ENCODE measurements at regions of chr6 and their contacts with region 1.

Region 1: DNA sequence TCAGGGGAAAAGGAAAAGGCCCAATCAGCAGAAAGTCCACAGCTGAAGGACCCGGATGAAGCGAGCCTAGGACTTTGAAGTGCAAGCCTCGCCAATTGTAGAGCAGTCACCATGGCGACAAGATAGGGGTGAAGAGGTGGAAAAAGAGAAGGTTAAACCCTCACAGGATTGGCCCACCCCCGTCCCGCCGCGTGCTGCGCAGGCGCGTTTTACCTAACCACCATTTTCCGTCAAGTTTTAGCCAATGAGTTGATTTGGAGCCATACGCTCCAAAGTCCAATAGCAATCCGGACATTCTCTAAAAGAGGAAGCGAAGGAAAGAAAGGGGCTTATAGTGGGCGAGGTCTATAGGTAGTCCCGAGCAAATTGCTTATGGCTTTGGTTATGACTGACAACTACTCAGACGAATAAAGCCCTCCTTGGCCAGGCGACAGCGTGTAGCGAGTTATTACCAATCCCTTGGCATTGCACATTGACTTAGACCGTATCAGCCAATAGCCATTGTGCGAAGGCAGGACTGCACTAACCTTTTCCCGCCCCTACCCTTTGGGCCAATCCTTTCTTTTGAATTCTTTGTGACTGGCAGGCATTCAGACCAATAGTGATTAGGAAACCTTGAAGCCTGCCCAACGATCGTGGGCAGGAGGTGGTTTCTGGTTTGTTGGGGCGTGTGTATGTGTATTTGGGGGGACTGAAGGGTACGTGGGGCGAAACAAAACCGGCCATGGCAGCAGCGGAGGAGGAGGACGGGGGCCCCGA is at the start of gene RNF5:
- DNase-seq: peak; percentile 100
- H3K4me3 Mint-ChIP-seq: peak within 1 kb of the TSS; percentile 79
- H3K27ac Mint-ChIP-seq: peak within 1 kb of the TSS; percentile 91
- H3K4me1 Mint-ChIP-seq: peaks cover 55% of the 10 kb centered on the region
- H3K27me3 Mint-ChIP-seq: no peaks in the 10 kb centered on the region
- CTCF ChIP-seq: no peak
- total RNA-seq, gene RNF5: 28.1 and 29.6 TPM in 2 replicates

Region 2: GRCh38 chr6:32127717-32128592 is 50.0 kb before region 1 on chr6 and contains the start of gene ATF6B:
- CTCF ChIA-PET with region 1: no interaction called
- POLR2A ChIA-PET with region 1: interaction called, 100 read pairs
- intact Hi-C with region 1: no loop called
- DNase-seq: peak; percentile 99
- H3K4me3 Mint-ChIP-seq: peak within 1 kb of the TSS; percentile 99
- H3K27ac Mint-ChIP-seq: peak within 1 kb of the TSS; percentile 96
- H3K4me1 Mint-ChIP-seq: peaks cover 26% of the 10 kb centered on the region
- H3K27me3 Mint-ChIP-seq: no peaks in the 10 kb centered on the region
- CTCF ChIP-seq: no peak
- total RNA-seq, gene ATF6B: 65.6 and 86.5 TPM in 2 replicates

Region 3: DNA sequence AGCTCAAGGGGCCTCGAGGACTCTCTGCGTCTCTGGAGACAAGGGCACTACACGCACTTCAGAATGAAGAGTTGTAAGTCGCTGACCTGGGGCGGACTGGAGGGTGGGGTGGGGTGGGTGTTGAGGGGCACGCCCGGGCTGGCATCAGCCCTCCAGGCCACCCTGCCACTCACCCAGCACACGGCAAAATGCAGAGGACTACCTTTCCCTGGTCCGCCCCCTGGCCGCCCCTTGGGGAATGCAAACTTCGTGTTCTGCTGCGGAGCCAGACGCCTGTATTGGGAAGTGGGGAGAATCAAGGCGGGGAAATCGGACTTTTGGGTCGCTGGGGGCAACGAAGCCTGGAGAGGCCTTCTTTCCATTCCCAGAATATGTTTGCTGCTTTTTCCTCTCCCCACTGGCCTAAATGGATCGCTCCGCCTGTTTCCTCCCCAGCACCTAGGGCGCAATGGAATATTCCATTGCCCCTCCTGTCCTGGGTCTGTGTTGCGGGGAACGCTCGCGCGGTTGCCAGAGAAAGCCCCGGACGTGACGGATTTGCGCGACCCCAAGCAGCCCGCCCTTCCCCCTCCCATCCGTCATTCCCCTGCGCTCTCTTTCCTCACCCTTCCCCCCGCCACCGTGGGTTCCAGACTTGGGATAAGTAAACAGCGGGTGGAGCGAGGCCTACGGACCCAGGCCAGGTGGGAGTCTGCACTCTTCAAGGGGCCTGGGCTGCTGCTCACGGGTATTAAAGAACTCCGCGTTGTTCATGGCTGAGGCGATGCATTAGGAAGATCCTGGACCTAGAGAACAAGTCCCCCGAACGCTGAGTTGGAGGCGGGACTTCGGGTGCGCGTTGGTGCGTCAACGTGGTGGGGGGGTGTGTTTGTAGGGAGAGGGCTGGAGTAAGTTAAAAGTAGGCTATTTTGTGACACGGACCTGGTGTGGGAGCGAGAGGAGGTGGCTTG is 24.1 kb before region 1 on chr6 and contains the start of gene PPT2:
- CTCF ChIA-PET with region 1: no interaction called
- POLR2A ChIA-PET with region 1: interaction called, 3 read pairs
- intact Hi-C with region 1: loop called (anchors 1 kb)
- DNase-seq: peak; percentile 79
- H3K4me3 Mint-ChIP-seq: peak within 1 kb of the TSS; percentile 86
- H3K27ac Mint-ChIP-seq: peak within 1 kb of the TSS; percentile 83
- H3K4me1 Mint-ChIP-seq: peaks cover 18% of the 10 kb centered on the region
- H3K27me3 Mint-ChIP-seq: no peaks in the 10 kb centered on the region
- CTCF ChIP-seq: no peak
- total RNA-seq, gene PPT2: 3.7 and 5.4 TPM in 2 replicates

Region 4: DNA sequence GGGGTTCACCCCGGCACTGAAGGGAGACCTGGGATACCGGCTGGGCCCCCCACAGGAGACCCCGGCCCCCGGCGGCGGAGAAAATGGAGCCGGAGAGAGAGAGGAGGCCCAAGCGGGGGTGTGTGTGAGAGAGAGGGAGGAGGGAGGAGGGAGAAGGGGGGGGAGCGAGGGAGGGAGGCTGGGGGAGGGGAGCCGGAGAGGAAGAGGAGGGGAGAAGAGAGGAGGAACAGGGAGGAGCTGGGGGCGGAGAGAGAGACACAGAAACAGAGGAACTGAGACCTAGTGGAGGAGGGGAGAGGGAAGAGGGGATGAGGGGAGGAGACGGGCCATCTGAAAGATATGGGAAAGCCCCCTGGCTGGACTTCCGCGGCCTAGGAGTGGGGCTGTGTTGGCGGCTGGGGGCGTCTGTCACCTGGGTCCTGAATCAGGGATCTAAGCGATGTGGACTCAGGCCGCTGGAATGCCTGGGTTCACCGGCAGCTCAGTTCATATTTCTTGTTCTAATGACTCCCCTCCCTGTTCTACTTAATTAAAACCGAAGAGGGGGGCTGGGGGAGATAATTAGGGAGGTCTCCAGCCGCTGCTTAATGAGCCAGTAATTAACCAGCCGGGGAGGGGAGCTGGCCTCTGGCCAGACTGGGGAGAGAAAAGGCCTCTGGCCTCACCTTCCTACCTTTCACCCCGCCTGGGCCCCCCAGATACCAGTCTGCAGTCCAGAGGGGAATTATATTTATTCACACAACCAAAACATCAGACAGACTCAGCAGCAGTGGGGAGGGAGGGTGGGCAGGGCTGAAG is 12.3 kb after region 1 on chr6 and contains the start of gene PBX2:
- CTCF ChIA-PET with region 1: interaction called, 4 read pairs
- POLR2A ChIA-PET with region 1: interaction called, 112 read pairs
- intact Hi-C with region 1: loop called (anchors 1 kb)
- DNase-seq: peak; percentile 92
- H3K4me3 Mint-ChIP-seq: peak within 1 kb of the TSS; percentile 83
- H3K27ac Mint-ChIP-seq: peak within 1 kb of the TSS; percentile 86
- H3K4me1 Mint-ChIP-seq: peaks cover 33% of the 10 kb centered on the region
- H3K27me3 Mint-ChIP-seq: no peaks in the 10 kb centered on the region
- CTCF ChIP-seq: no peak
- total RNA-seq, gene PBX2: 48.1 and 49.2 TPM in 2 replicates

Region 5: GRCh38 chr6:32195652-32195901 is 17.6 kb after region 1 on chr6:
- CTCF ChIA-PET with region 1: interaction called, 4 read pairs
- POLR2A ChIA-PET with region 1: interaction called, 112 read pairs
- intact Hi-C with region 1: loop called (anchors 1 kb)
- DNase-seq: peak; percentile 99
- H3K4me3 Mint-ChIP-seq: peak overlapping the region; percentile 93
- H3K27ac Mint-ChIP-seq: peak overlapping the region; percentile 98
- H3K4me1 Mint-ChIP-seq: peaks cover 12% of the 10 kb centered on the region
- H3K27me3 Mint-ChIP-seq: no peaks in the 10 kb centered on the region
- CTCF ChIP-seq: no peak

Measured in MCF 10A (cell line).